GM10248 (cell line): ENCODE measurements at regions of chr1 and their contacts with region 1.

Region 1: GRCh38 chr1:227434808-227435444 is 116.6 kb upstream of the CDC42BPA start:
- DNase-seq: no peak
- CTCF ChIP-seq: no peak

Region 2: DNA sequence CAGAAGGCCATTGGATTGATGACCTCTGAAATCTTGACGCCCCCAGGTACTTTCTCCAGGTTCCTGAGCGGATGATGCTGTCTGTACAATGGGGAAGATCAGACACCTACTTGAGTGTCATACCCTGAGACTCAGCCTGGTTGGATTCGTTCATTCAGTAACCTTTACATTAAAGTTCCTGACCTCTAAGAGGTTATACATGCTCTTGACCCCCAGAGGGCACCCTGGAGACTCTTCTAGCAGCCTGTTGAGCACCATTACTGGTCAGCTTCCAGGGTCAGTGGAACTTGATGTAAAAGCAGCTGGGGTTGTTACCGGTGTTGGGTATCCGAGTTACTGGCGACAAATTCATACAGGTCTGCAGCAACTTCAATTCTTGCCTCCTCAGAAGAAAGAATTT is 14.1 kb after region 1 on chr1:
- CTCF ChIA-PET with region 1: interaction called, 22 read pairs
- POLR2A ChIA-PET with region 1: no interaction called
- DNase-seq: peak; percentile 52
- CTCF ChIP-seq: peak; percentile 53